Activated T-helper 1 cell treated with anti-CD3 and anti-CD28 coated beads, Interleukin-12 subunit alpha, Interleukin-12 subunit beta, Interleukin-2, Interleukin-4 antibody, amounts not matched to agents 30 ng/mL and 10 ng/mL and 1 ng/mL, durations not matched to agents 14 hours and 24 hours and 36 hours (primary cell): ENCODE measurements at regions of chr14 and their contacts with region 1.

Region 1: DNA sequence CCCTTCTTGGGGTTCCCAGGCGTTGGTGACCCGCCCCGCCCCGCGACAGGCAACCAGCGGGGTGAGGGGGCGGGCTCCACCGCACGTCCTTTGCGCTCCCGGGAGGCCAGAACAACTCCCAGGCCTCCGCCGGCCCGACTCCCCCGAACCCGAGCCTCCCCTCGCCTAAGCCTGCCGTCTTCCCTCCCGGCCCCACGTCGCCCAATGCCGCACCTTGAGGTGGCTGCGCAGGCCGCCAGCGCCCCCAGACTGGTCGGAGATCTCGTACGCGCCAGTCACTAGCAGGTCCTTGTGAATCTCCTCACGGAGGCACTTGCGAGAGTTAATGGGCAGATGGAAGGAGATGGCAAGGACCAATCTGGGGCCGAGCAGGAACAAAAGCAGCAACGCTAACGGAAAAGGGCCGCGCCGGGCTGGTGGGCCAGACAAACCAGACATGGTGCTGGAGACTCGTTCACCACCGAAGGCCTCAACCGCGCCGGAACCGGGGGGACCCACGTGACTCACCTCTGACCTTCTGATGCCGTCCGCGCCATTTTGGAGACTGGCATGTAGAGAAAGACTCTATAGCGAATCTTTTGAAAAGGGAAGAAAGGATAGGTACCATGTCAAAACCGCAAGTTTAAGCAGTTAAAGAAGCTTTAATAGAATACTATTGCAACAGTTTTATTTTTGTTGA is at the start of gene TMED10:
- DNase-seq: peak; percentile 87
- H3K4me3 Mint-ChIP-seq: peak within 1 kb of the TSS; percentile 89
- H3K27ac Mint-ChIP-seq: peak within 1 kb of the TSS; percentile 96
- H3K4me1 Mint-ChIP-seq: peaks cover 35% of the 10 kb centered on the region
- H3K27me3 Mint-ChIP-seq: peaks cover 7% of the 10 kb centered on the region
- total RNA-seq, gene TMED10: 195 and 204 TPM in 2 replicates

Region 2: GRCh38 chr14:75063407-75064213 is 112.7 kb before region 1 on chr14 and contains the start of gene ACYP1:
- intact Hi-C with region 1: loop called (anchors 5 kb)
- DNase-seq: peak; percentile 89
- H3K4me3 Mint-ChIP-seq: peak within 1 kb of the TSS; percentile 99
- H3K27ac Mint-ChIP-seq: peak within 1 kb of the TSS; percentile 96
- H3K4me1 Mint-ChIP-seq: peaks cover 31% of the 10 kb centered on the region
- H3K27me3 Mint-ChIP-seq: no peaks in the 10 kb centered on the region
- total RNA-seq, gene ACYP1: 37.9 and 43.0 TPM in 2 replicates

Region 3: GRCh38 chr14:75138492-75138891 is 37.8 kb before region 1 on chr14:
- intact Hi-C with region 1: loop called (anchors 2 kb)
- DNase-seq: no peak
- H3K4me3 Mint-ChIP-seq: no peak overlapping the region
- H3K27ac Mint-ChIP-seq: peak overlapping the region; percentile 22
- H3K4me1 Mint-ChIP-seq: peaks cover 43% of the 10 kb centered on the region
- H3K27me3 Mint-ChIP-seq: no peaks in the 10 kb centered on the region

Region 4: GRCh38 chr14:75258615-75259466 is 82.6 kb after region 1 on chr14:
- intact Hi-C with region 1: loop called (anchors 1 kb)
- DNase-seq: peak; percentile 99
- H3K4me3 Mint-ChIP-seq: peak overlapping the region; percentile 85
- H3K27ac Mint-ChIP-seq: peak overlapping the region; percentile 100
- H3K4me1 Mint-ChIP-seq: peaks cover 23% of the 10 kb centered on the region
- H3K27me3 Mint-ChIP-seq: peaks cover 52% of the 10 kb centered on the region

Region 5: DNA sequence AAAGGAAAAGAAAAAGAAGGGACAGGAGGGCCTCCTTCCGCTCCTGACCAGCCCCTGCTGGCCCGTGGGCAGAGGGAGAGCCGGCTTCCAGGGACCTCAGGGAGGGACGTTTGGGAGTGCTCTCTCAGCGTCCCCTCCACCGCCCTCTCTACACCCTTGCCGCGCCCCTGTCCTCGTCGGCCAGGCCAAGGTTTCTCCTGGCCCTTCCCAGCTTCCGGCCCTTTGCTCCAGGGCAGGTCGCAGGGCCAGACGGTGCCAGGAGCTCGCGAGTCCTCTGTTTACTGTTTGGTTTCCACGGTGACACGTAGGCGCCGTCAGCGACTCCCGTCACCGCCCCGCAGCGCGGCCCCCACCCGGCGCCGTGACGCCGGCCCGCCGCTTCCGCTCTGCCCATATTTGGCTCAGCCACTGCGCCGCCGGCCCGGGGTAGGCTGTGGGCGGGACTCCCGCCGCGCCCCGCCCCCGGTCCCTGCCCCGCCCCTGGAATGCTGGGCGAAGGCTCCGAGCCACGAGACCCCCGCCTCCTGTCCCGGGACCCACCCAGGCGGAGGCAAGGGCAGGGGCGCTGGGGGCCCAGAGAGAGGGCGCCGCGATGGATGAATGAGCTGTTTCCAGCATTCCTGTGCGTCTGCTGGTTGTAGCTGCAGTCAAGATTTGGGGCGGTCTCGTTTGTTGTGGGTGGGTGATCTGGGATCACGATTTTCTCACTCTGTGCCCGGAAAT is 117.8 kb after region 1 on chr14:
- intact Hi-C with region 1: loop called (anchors 1 kb)
- DNase-seq: peak; percentile 92
- H3K4me3 Mint-ChIP-seq: peak overlapping the region; percentile 72
- H3K27ac Mint-ChIP-seq: peak overlapping the region; percentile 95
- H3K4me1 Mint-ChIP-seq: peaks cover 22% of the 10 kb centered on the region
- H3K27me3 Mint-ChIP-seq: peaks cover 26% of the 10 kb centered on the region

Region 6: DNA sequence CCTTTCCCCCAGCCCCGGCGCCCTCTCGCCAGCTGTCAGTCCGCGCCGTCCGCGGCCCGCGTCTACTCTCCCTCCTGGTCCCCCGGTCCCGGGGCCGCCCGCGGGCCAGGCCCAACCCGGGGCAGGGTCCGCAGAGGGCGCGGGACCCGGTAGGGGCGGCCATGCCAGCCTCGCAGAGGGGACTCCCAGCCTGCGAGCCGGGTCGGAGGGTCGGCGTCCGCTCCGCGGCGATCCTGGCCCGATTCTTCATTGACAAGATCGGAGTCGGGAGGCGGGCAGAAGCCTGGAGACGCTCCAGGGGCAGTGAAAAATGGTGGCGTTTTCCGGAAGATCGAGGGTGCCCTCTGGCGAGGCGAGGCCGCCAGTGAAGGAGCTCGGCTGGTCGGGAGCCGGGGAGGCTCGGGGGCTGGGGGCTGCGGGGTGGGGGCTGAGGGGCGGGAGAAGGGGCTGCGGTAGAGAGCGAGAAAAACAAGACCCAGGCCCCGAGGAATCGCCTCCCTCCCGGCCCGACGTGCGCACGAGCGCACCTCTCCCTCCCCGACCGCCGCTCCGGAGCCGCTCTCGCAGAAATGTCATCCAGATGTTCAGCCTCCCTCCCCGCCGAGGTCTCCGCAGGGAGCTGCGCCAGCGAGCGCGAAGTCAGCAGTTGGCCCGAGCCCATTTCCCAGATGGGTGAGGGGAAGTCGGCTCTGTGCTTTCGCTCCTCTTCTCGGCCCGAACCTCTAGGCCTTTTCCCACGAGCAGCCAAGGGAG is 806.2 kb after region 1 on chr14:
- intact Hi-C with region 1: loop called (anchors 5 kb)
- DNase-seq: peak; percentile 75
- H3K4me3 Mint-ChIP-seq: peak overlapping the region; percentile 84
- H3K27ac Mint-ChIP-seq: peak overlapping the region; percentile 85
- H3K4me1 Mint-ChIP-seq: peaks cover 52% of the 10 kb centered on the region
- H3K27me3 Mint-ChIP-seq: peaks cover 5% of the 10 kb centered on the region